ENCODE measurements at regions of chr4 and their contacts with region 1.

Region 1: GRCh38 chr4:76430519-76431388 is 4.3 kb upstream of the SHROOM3 start:
- DNase-seq: no peak
- ATAC-seq: no peak
- H3K4me3 ChIP-seq: no peak overlapping the region
- H3K27ac ChIP-seq: no peak overlapping the region
- H3K4me1 ChIP-seq: peaks cover 6% of the 10 kb centered on the region
- H3K27me3 ChIP-seq: no peaks in the 10 kb centered on the region
- CTCF ChIP-seq: peak; percentile 69

Region 2: DNA sequence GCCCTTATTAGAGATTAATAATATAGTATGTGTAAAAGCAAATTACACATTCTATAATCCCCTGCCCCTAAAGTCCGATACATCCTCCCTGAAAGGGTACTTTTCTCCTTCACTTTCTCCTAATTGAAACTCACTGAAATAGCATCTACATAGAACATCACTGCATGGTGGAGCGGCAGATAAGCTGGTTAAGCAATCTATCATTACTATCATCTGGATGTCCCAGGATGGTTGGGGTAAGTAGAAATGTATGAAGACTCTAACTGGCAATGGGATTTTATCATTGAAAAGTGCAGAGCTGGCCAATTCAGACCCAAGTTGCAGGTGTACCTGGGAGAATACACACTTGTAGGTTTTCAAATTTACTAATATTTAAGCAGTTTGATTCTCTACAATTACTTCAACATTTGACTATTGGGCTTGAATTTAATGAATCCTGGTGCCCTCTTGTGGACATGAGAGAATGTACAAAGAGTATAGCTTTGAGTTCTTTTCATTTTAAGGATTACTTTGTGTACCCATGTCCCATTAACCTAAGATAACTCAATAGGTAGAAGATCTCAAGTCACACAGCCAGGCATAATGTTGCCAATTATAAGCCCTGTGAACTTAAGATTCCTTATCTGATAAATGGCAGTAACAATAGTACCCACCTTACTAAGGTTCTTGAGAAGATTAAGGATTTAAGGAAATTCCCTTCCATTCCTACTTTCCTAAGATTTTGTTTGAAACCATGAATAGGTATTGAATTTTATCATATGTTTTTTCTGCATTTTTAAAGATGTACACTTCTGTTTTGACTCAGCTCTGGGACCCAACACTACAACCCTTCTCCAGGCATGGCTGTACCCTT is 74.1 kb after region 1 on chr4:
- intact Hi-C with region 1: loop called (anchors 2 to 5 kb)
- DNase-seq: no peak
- ATAC-seq: peak; percentile 40 to 74 (median 54)
- H3K4me3 ChIP-seq: no peak overlapping the region
- H3K27ac ChIP-seq: no peak overlapping the region
- H3K4me1 ChIP-seq: no peaks in the 10 kb centered on the region
- H3K27me3 ChIP-seq: no peaks in the 10 kb centered on the region
- CTCF ChIP-seq: peak; percentile 75

Region 3: DNA sequence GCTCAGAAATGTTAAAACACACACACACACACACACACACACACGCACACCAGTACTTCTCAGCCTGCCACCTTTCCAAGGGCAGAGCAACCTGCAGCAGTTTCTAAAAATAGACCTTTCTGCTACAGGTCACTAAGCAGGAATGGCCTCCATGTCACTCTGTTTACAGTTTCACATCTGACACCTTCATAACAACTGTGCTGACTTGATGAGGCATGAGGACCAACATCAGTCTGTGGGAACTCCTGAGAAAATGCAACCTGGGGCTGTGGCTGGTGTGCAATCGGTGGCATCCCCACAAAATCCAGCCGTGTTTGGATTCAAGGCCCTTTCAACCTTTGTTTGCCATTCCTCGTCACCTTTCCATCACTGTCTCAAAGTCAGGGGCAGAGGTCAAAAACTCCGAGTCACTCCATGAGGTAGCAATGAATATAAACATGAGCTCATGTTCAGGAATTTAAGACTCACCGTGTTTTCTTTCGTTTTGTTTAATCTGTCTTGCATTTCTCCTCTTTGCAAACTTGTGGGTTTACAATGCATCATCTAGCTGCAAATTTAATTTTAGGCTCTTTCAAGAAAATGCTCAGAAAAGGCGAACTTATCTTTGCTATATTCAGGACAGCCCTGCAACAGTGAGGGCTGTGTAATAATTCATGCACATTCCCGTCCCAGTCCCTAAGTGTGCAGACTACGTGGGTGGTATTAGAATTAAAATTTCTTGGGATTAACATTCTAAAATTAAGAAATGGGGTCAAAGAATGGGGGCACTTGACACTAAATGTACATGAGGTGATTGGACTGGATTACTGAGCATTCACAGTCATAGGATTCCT is 139.6 kb after region 1 on chr4:
- intact Hi-C with region 1: no loop called
- DNase-seq: no peak
- ATAC-seq: peak in 3 of 4 donors; percentile 49 to 80 (median 59)
- H3K4me3 ChIP-seq: no peak overlapping the region
- H3K27ac ChIP-seq: no peak overlapping the region
- H3K4me1 ChIP-seq: peaks cover 11% of the 10 kb centered on the region
- H3K27me3 ChIP-seq: no peaks in the 10 kb centered on the region
- CTCF ChIP-seq: no peak

Region 4: GRCh38 chr4:76758290-76758882 is 327.6 kb after region 1 on chr4:
- intact Hi-C with region 1: loop called (anchors 5 to 10 kb)
- DNase-seq: no peak
- ATAC-seq: peak; percentile 58 to 74 (median 63)
- H3K4me3 ChIP-seq: no peak overlapping the region
- H3K27ac ChIP-seq: no peak overlapping the region
- H3K4me1 ChIP-seq: no peaks in the 10 kb centered on the region
- H3K27me3 ChIP-seq: no peaks in the 10 kb centered on the region
- CTCF ChIP-seq: peak; percentile 76

Region 5: GRCh38 chr4:76765473-76766183 is 334.9 kb after region 1 on chr4:
- intact Hi-C with region 1: loop called in 1 of 2 experiments (anchors 10 kb)
- DNase-seq: no peak
- ATAC-seq: no peak
- H3K4me3 ChIP-seq: no peak overlapping the region
- H3K27ac ChIP-seq: no peak overlapping the region
- H3K4me1 ChIP-seq: no peaks in the 10 kb centered on the region
- H3K27me3 ChIP-seq: no peaks in the 10 kb centered on the region
- CTCF ChIP-seq: no peak

Region 6: DNA sequence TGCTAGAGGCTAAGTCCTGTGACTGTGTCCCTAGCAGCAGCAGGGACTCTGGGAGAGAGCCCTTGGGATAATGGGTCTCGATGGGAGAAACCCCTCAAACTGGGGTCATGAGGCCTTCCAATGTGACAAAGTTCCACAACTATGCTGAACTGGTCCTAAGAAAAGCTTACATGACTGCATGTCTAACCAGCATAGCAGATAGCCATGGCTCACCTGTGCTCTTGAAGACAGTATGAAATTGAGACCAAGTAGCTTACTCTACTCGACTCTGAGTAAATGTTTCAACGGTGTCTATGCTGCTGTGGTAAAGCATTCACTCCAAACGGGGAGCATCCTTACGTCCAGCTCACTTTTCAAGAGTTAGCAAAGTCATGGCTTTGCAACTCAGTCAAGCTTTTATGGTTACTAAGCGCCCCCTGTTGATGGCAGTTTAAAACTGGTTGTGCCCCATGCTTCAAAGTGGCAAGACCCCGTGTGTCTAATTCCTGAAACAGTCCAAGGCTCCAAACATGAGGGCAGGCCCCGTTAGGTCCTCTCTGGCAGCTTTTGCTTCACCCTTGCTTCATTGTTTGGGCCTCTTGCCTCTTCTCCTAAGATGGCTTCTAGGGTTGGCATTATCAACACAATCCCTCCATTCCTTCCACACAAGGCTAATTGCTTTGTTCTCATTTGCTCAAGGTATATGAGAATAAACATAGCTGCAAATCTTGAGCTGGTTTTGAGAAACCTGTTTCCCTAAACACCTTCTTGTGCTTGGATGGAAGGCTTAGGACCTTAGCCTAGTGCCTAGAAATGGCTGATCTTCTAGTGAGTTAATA is 772.8 kb after region 1 on chr4:
- intact Hi-C with region 1: loop called in 1 of 2 experiments (anchors 10 kb)
- DNase-seq: peak; percentile 26 to 58
- ATAC-seq: peak; percentile 76 to 92 (median 80)
- H3K4me3 ChIP-seq: no peak overlapping the region
- H3K27ac ChIP-seq: no peak overlapping the region
- H3K4me1 ChIP-seq: no peaks in the 10 kb centered on the region
- H3K27me3 ChIP-seq: no peaks in the 10 kb centered on the region
- CTCF ChIP-seq: peak; percentile 74